ENCODE measurements at regions of chr11 and their contacts with region 1.

Region 1: DNA sequence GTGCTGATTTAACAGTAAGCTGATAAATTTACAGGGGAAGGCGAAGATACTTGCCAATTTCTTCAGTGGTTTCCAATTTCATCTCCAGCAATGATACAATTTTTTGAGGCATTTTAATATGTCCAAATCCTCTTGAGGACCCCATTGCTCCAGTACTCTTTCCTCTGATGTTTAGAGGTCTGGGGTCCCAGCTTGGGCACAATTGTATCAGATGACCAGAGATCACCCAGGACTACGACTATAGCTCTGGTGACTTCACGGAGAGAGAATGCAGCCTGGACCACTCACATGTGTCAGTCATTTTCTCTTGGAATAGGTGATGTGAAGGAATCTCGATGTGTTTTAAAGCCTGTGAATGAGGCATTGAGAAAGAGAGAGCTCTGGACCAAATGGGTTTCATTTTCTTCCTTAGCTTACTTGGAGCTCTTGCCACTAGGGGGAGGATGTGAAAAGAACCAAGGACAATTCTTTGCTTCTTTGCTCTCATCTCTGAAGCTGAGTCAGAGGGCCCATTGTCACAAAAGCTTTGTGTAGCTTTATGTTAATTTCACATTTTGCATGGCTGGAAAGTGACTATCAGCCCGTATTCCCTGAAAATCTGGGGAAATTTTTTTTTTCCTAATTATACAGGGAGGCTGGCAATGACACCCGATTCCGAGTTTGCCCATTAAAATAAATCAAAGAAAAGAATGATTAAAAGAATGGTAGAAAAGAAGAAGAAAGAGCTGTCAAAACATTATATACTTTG is 6.7 kb upstream of the CCDC90B start:
- DNase-seq: peak; percentile 42
- CTCF ChIP-seq: peak; percentile 71

Region 2: GRCh38 chr11:82867495-82868082 is 425.3 kb before region 1 on chr11:
- CTCF ChIA-PET with region 1: interaction called, 10 read pairs
- POLR2A ChIA-PET with region 1: no interaction called
- DNase-seq: peak; percentile 63
- CTCF ChIP-seq: peak; percentile 48

Region 3: GRCh38 chr11:83241291-83241946 is 51.5 kb before region 1 on chr11:
- CTCF ChIA-PET with region 1: no interaction called
- POLR2A ChIA-PET with region 1: no interaction called
- DNase-seq: peak; percentile 16
- CTCF ChIP-seq: peak; percentile 59

Region 4: DNA sequence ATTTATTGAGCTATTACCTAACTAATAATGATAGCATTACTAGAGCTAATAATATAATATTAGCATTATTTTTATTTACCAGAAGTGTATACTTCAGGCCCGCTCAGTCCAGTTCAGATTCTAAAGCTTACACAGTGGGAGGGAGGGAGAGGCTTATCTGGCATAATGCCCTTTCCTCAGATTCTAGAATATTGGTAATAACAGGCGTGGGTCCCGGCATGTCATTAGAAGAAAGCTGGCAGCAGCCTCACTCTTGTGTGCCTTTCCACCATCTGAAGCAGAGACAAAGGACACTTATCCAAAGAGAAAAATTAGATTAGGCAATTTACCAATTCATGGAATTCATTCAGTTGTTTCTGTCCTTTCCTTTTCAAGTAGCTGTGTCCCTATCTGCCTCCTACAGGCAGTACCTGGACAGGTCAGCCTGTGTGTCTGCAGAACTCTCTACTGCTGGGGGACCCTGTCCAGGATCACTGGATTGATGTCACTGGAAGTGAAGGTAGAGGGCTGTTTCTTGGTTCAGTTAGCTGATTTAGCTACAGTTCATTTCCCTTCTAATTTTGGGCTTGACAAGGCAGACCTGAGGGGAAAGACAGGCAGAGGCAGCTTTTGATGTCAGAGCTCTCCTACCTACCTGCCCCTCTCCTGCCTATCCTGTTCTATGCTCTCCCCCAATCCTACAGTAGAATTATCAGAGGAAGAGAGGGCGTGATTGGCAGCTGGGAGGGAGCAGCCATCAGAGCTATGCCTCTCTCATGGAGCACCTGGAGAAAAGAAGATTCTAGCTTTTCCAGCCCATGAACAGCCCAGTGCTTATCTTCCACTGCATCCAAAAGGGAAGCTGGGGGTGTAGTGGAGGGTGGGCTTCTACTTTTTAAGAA is 13.6 kb after region 1 on chr11:
- CTCF ChIA-PET with region 1: interaction called, 121 read pairs
- POLR2A ChIA-PET with region 1: no interaction called
- DNase-seq: no peak
- CTCF ChIP-seq: no peak

Region 5: DNA sequence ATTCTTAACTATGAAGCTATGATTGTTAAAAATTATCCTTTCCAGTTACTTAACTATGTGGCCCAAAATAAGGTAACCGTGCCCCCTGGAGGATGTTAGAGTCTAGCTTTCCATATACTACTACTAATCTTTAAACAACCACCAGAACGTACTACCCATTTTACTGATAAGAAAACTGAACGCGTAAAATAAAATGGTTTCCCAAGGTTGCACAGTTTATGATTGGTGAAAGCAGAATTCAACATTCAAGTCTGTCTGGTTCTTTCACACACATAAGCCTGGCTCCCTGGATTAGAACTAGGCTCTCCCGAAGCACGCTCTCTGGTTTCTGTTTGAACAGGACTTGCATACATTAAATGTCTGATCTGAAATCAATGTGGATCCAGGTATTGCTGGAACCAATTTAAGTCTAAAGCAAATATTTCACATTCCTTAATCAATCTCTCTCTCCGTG is 431.2 kb after region 1 on chr11:
- CTCF ChIA-PET with region 1: interaction called, 27 read pairs
- POLR2A ChIA-PET with region 1: no interaction called
- DNase-seq: peak; percentile 29
- CTCF ChIP-seq: no peak

Region 6: DNA sequence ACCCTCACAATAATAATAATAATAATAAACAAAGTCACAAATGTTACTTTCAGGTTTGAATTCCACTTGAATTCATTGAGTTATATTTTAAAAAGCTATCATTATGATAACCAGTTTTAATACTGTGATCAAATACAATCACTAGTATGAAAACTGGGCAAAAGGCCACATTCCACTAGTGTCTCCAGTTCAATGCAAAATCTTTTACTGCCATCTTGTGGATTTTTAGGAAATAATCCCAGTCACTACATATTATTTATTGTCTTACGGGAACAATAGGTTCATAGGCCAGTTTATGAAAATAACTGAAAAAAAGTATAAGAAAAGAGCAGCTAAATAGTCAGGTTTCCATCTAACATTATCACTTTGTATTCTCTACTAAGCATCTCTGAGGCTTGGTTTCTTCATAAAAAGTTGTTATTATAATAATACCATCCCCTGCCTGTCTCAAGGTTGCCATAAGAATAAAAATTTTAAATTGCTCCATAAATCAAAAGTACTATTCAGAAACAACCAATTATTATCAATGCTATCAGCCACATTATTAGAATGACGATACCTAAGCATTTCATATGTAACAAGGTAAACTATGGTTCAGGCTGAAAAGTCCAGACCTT is 527.2 kb after region 1 on chr11:
- CTCF ChIA-PET with region 1: interaction called, 10 read pairs
- POLR2A ChIA-PET with region 1: no interaction called
- DNase-seq: peak; percentile 11
- CTCF ChIP-seq: peak; percentile 30